Activated CD4-positive, alpha-beta T cell treated with anti-CD3 and anti-CD28 coated beads for 36 hours (primary cell): ENCODE measurements at regions of chr21 and their contacts with region 1.

Region 1: DNA sequence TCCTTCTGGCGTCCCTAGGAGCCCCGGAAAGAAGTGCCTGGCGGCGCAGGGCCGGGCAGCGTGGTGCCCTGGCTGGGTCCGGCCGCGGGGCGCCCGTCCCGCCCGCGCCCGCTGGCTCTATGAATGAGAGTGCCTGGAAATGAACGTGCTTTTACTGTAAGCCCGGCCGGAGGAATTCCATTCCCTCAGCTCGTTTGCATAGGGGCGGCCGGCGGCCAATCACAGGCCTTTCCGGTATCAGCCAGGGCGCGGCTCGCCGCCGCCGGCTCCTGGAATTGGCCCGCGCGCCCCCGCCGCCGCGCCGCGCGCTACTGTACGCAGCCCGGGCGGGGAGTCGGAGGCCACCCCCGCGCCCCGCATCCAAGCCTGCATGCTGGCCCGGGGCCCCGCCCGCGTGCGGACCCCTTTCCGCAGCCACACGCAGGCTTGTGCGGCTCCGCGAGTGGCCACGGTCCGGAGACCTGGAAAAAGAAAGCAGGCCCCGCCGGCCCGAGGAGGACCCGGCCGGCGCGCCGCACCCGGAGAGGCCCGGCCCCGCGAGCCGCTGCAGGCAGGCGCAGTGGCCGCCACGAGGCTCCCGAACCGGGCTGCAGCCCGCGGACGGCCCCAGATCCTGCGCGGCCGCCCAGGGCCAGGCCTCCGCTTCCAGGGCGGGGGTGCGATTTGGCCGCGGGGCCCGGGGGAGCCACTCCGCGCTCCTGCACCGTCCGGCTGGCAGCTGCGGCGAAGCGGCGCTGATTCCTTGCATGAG is 160.4 kb downstream of the RUNX1 start:
- DNase-seq: peak; percentile 93
- ATAC-seq: peak; percentile 56
- H3K4me3 Mint-ChIP-seq: peak overlapping the region; percentile 92
- H3K27ac Mint-ChIP-seq: peak overlapping the region; percentile 100
- H3K4me1 Mint-ChIP-seq: peaks cover 37% of the 10 kb centered on the region
- H3K27me3 Mint-ChIP-seq: no peaks in the 10 kb centered on the region

Region 2: DNA sequence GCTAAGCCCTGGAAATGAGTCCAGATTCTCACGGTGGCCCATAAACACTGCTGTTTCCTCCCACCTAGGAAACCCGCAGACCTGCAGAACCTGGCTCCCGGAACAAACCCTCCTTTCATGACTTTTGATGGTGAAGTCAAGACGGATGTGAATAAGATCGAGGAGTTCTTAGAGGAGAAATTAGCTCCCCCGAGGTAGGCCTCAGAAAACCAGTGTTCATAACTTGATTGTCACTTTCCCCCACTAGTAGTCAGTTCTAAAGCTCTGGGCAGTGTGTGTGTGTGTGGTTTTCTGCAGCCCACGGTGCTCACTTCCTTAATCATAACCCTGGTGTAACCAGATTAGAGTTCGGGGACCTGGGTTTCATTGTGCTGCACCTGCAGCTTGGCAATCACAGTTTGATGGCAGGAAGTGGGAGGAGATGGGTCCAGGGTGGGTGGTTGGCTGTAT is 180.8 kb before region 1 on chr21:
- CTCF ChIA-PET with region 1: no interaction called
- POLR2A ChIA-PET with region 1: no interaction called
- intact Hi-C with region 1: loop called (anchors 1 to 5 kb)
- DNase-seq: peak; percentile 83
- ATAC-seq: peak; percentile 94
- H3K4me3 Mint-ChIP-seq: no peak overlapping the region
- H3K27ac Mint-ChIP-seq: peak overlapping the region; percentile 49
- H3K4me1 Mint-ChIP-seq: peaks cover 26% of the 10 kb centered on the region
- H3K27me3 Mint-ChIP-seq: peaks cover 16% of the 10 kb centered on the region

Region 3: DNA sequence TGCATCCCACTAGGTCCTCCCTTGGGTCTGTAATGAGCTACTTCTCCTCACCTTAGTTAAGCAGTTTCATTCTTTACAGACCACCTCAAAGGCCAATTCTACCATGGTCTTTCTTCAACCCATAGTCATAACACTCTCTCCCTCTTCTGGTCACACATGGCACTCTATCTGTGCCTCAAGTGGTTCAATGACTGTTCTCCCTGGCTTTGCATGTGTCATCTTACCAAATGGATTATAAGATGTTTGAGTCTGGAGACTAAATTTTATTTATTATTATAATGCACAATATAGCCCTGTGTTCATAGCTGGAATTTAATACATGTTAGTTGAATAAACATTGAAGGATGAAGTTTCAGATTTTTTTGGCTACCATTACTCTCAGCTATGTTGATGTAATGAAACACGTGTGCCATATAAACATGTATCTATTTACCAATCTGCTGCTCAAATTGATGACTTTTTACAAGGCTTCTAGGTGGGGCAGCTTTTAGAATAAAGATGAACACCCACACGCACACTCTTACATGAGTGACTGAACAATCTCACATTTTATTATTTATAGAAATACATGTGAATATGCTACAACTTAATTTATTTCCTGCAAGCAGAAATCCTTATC is 58.3 kb after region 1 on chr21:
- CTCF ChIA-PET with region 1: interaction called, 9 read pairs
- POLR2A ChIA-PET with region 1: interaction called, 21 read pairs
- intact Hi-C with region 1: loop called (anchors 1 to 2 kb)
- DNase-seq: no peak
- ATAC-seq: peak; percentile 65
- H3K4me3 Mint-ChIP-seq: peak overlapping the region; percentile 13
- H3K27ac Mint-ChIP-seq: peak overlapping the region; percentile 95
- H3K4me1 Mint-ChIP-seq: peaks cover 92% of the 10 kb centered on the region
- H3K27me3 Mint-ChIP-seq: no peaks in the 10 kb centered on the region

Region 4: GRCh38 chr21:35084869-35085268 is 196.1 kb after region 1 on chr21:
- CTCF ChIA-PET with region 1: interaction called, 4 read pairs
- POLR2A ChIA-PET with region 1: interaction called, 11 read pairs
- intact Hi-C with region 1: loop called (anchors 1 kb)
- DNase-seq: no peak
- ATAC-seq: no peak
- H3K4me3 Mint-ChIP-seq: no peak overlapping the region
- H3K27ac Mint-ChIP-seq: no peak overlapping the region
- H3K4me1 Mint-ChIP-seq: peaks cover 44% of the 10 kb centered on the region
- H3K27me3 Mint-ChIP-seq: no peaks in the 10 kb centered on the region

Region 5: GRCh38 chr21:35342440-35342839 is 453.7 kb after region 1 on chr21:
- CTCF ChIA-PET with region 1: no interaction called
- POLR2A ChIA-PET with region 1: no interaction called
- intact Hi-C with region 1: loop called in 1 of 2 experiments (anchors 2 kb)
- DNase-seq: peak; percentile 55
- ATAC-seq: peak; percentile 78
- H3K4me3 Mint-ChIP-seq: peak overlapping the region; percentile 59
- H3K27ac Mint-ChIP-seq: peak overlapping the region; percentile 94
- H3K4me1 Mint-ChIP-seq: peaks cover 39% of the 10 kb centered on the region
- H3K27me3 Mint-ChIP-seq: peaks cover 1% of the 10 kb centered on the region

Region 6: DNA sequence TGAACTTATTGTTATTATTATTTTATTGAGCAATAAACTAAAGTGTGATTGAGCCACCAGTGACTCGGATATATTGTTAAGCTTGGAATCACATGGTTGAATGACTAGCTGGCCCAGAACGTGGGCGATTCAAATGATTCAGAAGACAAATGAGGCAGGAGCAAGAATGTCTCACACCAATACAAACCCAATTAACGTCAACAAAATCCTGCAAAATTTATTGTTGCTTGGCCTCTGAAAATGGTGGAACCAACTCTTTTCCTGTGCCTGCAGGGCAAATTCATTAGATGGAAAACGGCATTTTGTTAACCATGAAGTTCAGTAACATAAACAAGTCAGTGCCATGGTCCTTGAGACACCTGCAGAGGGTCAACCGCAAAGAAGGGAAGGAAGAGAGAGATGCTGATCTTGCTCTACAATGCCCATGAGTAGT is 689.6 kb after region 1 on chr21:
- CTCF ChIA-PET with region 1: no interaction called
- POLR2A ChIA-PET with region 1: no interaction called
- intact Hi-C with region 1: loop called in 1 of 2 experiments (anchors 1 kb)
- DNase-seq: no peak
- ATAC-seq: no peak
- H3K4me3 Mint-ChIP-seq: no peak overlapping the region
- H3K27ac Mint-ChIP-seq: peak overlapping the region; percentile 89
- H3K4me1 Mint-ChIP-seq: peaks cover 27% of the 10 kb centered on the region
- H3K27me3 Mint-ChIP-seq: peaks cover 10% of the 10 kb centered on the region